Activated B cell treated with CpG ODN at 0.5 μM for 24 hours (primary cell): ENCODE measurements at regions of chr17 and their contacts with region 1.

Region 1: DNA sequence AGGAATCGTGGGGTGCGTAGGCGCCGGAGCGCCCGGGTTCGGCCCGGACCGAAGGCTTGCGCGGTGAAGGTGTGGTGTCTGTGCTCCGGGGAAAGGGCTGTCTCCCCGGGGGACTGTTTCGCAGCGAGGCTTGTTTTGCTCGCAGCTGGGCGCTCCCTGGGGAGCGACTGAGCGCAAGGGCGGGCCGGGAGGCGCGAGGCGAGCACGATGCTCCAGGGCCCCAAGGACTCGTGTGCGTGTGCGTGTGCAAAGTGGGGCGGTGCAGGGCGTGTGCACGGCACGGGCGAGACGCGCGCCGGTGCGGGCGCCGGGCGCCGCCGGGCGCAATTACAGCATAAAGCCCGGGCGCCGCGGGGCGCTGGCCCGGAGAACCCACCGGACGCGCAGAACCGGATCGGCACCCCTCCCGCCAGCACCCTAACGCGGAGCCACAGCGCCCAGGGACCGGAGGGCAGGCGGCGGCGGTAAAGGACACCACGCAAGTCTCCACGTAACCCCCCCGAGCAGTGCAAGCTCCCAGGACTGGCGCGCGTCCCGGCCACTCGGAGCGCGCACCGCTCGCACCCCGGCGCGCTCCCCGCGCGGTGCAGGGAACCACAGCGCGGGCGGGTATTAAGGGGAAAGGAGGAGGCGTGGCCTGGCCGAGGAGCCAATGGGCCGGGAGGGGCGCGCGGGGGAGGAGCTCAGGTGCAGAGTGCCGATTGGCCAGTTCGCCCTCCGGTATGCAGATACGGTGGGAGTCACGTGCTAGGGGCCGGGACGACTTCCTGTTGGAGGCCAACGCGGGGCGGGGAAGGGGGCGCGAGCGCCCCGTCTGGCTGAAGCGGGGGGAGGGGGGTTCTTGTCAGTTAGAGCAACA is at the start of gene TNRC6C:
- DNase-seq: peak; percentile 98
- ATAC-seq: peak; percentile 85
- H3K4me3 Mint-ChIP-seq: peak within 1 kb of the TSS; percentile 89
- H3K27ac Mint-ChIP-seq: peak within 1 kb of the TSS; percentile 96
- H3K4me1 Mint-ChIP-seq: peaks cover 41% of the 10 kb centered on the region
- H3K27me3 Mint-ChIP-seq: peaks cover 15% of the 10 kb centered on the region
- CTCF ChIP-seq: no peak
- total RNA-seq, gene TNRC6C: 14.4 and 24.6 TPM in 2 replicates

Region 2: GRCh38 chr17:76737082-76737675 is 1220.9 kb before region 1 on chr17 and contains the start of gene SRSF2:
- CTCF ChIA-PET with region 1: no interaction called
- POLR2A ChIA-PET with region 1: interaction called, 11 read pairs
- intact Hi-C with region 1: loop called (anchors 2 kb)
- DNase-seq: peak; percentile 99
- ATAC-seq: peak; percentile 74
- H3K4me3 Mint-ChIP-seq: peak within 1 kb of the TSS; percentile 97
- H3K27ac Mint-ChIP-seq: peak within 1 kb of the TSS; percentile 96
- H3K4me1 Mint-ChIP-seq: peaks cover 50% of the 10 kb centered on the region
- H3K27me3 Mint-ChIP-seq: no peaks in the 10 kb centered on the region
- CTCF ChIP-seq: no peak
- total RNA-seq, gene SRSF2: 335 and 367 TPM in 2 replicates

Region 3: GRCh38 chr17:77410470-77410869 is 547.6 kb before region 1 on chr17:
- CTCF ChIA-PET with region 1: no interaction called
- POLR2A ChIA-PET with region 1: interaction called, 16 read pairs
- intact Hi-C with region 1: no loop called
- DNase-seq: no peak
- ATAC-seq: no peak
- H3K4me3 Mint-ChIP-seq: no peak overlapping the region
- H3K27ac Mint-ChIP-seq: peak overlapping the region; percentile 70
- H3K4me1 Mint-ChIP-seq: peaks cover 73% of the 10 kb centered on the region
- H3K27me3 Mint-ChIP-seq: no peaks in the 10 kb centered on the region
- CTCF ChIP-seq: no peak

Region 4: DNA sequence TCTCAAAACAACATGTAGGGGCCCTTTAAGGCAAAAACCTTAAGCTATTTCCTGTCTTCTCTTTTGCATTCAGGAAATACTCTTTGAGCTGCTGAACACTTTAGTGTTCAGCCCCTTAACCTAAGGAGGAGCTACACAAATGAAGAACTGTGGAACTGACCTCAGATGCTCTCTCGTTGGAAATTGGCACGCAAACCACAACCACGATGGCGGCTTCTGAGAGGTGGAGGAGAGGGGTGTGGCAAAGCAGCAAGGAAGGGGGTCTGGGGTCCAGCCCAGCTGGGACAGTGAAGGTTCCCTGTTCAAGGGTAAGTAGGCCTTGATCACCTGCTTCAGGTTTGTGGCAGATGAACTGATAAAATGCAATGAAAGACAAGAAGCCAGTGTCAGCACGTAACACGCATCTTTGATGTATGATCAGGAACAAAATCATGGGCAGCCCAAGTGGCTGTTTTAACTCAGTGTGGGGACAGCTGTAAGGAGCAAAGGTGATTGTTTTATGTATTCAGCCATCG is 291.1 kb before region 1 on chr17:
- CTCF ChIA-PET with region 1: no interaction called
- POLR2A ChIA-PET with region 1: interaction called, 9 read pairs
- intact Hi-C with region 1: loop called (anchors 2 kb)
- DNase-seq: peak; percentile 24
- ATAC-seq: peak; percentile 96
- H3K4me3 Mint-ChIP-seq: peak overlapping the region; percentile 82
- H3K27ac Mint-ChIP-seq: peak overlapping the region; percentile 82
- H3K4me1 Mint-ChIP-seq: peaks cover 23% of the 10 kb centered on the region
- H3K27me3 Mint-ChIP-seq: no peaks in the 10 kb centered on the region
- CTCF ChIP-seq: no peak

Region 5: DNA sequence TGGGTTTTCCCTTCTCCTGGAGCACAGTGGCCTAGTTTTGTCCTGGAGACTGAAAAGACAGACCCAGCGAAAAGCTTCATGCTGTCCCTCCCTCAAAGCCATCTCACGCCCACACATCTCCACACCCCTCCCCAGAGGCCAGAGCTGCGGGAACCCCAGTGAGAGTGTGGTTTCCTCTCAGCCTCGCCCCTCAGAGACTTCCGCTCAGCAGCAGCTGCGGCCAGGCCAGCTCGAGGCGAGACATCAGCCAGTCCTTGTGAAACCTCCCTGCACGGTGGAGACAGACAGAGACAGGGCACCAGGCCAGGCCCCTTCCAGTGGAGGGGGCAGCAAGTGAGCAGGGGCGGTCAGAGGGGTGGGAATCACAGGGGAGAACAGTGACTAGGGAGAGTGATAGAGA is 76.5 kb before region 1 on chr17:
- CTCF ChIA-PET with region 1: no interaction called
- POLR2A ChIA-PET with region 1: interaction called, 132 read pairs
- intact Hi-C with region 1: loop called (anchors 1 kb)
- DNase-seq: peak; percentile 82
- ATAC-seq: peak; percentile 86
- H3K4me3 Mint-ChIP-seq: peak overlapping the region; percentile 76
- H3K27ac Mint-ChIP-seq: peak overlapping the region; percentile 86
- H3K4me1 Mint-ChIP-seq: peaks cover 82% of the 10 kb centered on the region
- H3K27me3 Mint-ChIP-seq: peaks cover 6% of the 10 kb centered on the region
- CTCF ChIP-seq: no peak

Region 6: DNA sequence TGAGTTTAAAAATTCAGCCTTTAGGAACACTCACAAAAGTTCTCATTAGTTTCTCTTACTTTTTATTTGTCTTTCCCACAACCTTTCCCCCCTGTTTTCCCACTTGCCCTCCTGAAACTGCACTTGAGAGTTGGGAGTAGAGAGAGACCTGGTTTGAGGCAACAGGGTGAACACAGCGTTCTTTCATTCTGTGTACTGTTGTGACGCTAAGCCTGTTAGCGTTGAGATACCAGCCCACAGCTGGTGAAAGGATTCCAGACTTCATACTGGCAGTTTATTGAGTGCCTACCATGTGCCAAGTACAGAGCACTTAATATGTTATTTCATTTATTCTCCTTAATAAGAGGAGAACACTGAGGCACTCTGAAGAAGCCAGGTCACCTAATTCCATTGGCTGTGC is 10.7 kb after region 1 on chr17:
- CTCF ChIA-PET with region 1: interaction called, 3 read pairs
- POLR2A ChIA-PET with region 1: interaction called, 10 read pairs
- intact Hi-C with region 1: no loop called
- DNase-seq: no peak
- ATAC-seq: no peak
- H3K4me3 Mint-ChIP-seq: no peak overlapping the region
- H3K27ac Mint-ChIP-seq: no peak overlapping the region
- H3K4me1 Mint-ChIP-seq: peaks cover 31% of the 10 kb centered on the region
- H3K27me3 Mint-ChIP-seq: no peaks in the 10 kb centered on the region
- CTCF ChIP-seq: no peak

Region 7: GRCh38 chr17:78032166-78032565 is 74.1 kb after region 1 on chr17:
- CTCF ChIA-PET with region 1: no interaction called
- POLR2A ChIA-PET with region 1: no interaction called
- intact Hi-C with region 1: no loop called
- DNase-seq: no peak
- ATAC-seq: no peak
- H3K4me3 Mint-ChIP-seq: no peak overlapping the region
- H3K27ac Mint-ChIP-seq: no peak overlapping the region
- H3K4me1 Mint-ChIP-seq: no peaks in the 10 kb centered on the region
- H3K27me3 Mint-ChIP-seq: no peaks in the 10 kb centered on the region
- CTCF ChIP-seq: no peak

Region 8: GRCh38 chr17:78186692-78187595 is 228.9 kb after region 1 on chr17 and contains the starts of genes AFMID and TK1:
- CTCF ChIA-PET with region 1: no interaction called
- POLR2A ChIA-PET with region 1: no interaction called
- intact Hi-C with region 1: no loop called
- DNase-seq: peak; percentile 83
- ATAC-seq: peak; percentile 96
- H3K4me3 Mint-ChIP-seq: peak within 1 kb of the TSS; percentile 85
- H3K27ac Mint-ChIP-seq: peak within 1 kb of the TSS; percentile 54
- H3K4me1 Mint-ChIP-seq: peaks cover 18% of the 10 kb centered on the region
- H3K27me3 Mint-ChIP-seq: no peaks in the 10 kb centered on the region
- CTCF ChIP-seq: no peak
- total RNA-seq, gene AFMID: 11.2 and 15.4 TPM in 2 replicates
- total RNA-seq, gene TK1: 3.8 TPM in 2 replicates